ENCODE measurements at regions of chr6 and their contacts with region 1.

Region 1: DNA sequence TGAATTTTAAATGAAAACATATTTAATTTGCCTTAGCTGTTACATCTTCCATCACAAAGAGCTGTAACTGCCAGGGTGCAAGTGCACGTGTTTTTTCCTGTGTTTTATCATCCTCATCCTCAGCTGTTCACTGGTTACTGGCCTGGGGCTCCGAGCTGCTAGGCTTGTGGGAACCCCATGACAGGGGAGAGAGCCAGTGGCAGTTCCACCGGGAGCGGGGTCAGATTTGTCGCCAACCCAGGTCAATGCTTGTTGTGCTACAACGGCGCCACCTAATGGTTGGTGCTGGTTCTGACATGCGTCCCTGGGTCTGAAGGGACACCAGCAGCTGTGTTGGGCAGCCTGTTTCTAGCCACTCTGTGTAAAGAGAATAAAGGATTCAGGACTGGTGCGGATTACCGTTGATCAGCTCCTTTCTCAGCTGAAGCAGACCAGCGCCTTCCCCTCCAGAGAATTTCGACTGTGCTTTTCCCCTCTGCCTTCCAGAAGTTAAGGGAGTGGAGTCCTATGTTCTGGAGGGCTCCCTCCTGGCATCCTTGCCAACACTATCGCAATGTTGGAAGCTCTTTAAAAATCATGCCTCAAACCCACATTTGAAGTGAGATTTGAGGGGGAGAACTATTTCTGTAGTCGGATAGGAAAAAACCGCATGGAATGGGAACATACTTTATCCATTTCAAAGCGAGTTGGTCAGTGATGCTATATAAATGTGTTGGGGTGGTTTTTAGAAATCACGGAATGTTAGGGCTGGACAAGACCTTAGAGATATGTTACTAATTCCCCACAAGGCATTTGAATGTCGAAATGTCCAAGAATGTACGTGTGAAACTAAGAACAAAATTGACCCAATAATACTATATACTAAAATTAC is 32.1 kb downstream of the SUMO4 start:
- DNase-seq: peak; percentile 77
- ATAC-seq: peak; percentile 96
- H3K4me3 Mint-ChIP-seq: peak overlapping the region; percentile 44
- H3K27ac Mint-ChIP-seq: no peak overlapping the region
- H3K4me1 Mint-ChIP-seq: peaks cover 4% of the 10 kb centered on the region
- H3K27me3 Mint-ChIP-seq: no peaks in the 10 kb centered on the region
- CTCF ChIP-seq: no peak

Region 2: DNA sequence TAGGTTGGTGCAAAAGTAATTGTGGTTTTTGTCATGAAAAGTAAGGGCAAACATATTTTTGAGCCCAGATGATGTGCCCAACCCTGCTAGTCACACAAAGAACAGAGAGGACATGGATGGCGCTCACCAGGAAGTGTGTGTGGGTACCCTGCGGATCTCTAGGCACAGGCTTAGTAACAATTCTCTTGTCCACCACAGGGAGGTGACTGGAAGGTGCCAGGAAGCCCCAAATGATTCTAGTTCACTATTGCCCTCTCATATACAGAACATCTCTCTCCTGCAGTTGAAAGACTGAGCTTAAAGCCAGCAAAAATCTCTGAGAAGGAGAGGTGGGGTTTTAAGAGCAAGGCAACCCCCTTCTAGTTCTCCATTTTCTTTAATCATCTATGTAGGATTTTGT is 386.7 kb before region 1 on chr6:
- CTCF ChIA-PET with region 1: interaction called, 13 read pairs
- POLR2A ChIA-PET with region 1: no interaction called
- intact Hi-C with region 1: no loop called
- DNase-seq: no peak
- ATAC-seq: peak; percentile 60
- H3K4me3 Mint-ChIP-seq: no peak overlapping the region
- H3K27ac Mint-ChIP-seq: peak overlapping the region; percentile 68
- H3K4me1 Mint-ChIP-seq: peaks cover 45% of the 10 kb centered on the region
- H3K27me3 Mint-ChIP-seq: no peaks in the 10 kb centered on the region
- CTCF ChIP-seq: no peak

Region 3: GRCh38 chr6:149082286-149082707 is 349.8 kb before region 1 on chr6:
- CTCF ChIA-PET with region 1: interaction called, 52 read pairs
- POLR2A ChIA-PET with region 1: interaction called, 4 read pairs
- intact Hi-C with region 1: loop called (anchors 1 kb)
- DNase-seq: peak; percentile 43
- ATAC-seq: peak; percentile 75
- H3K4me3 Mint-ChIP-seq: no peak overlapping the region
- H3K27ac Mint-ChIP-seq: no peak overlapping the region
- H3K4me1 Mint-ChIP-seq: peaks cover 13% of the 10 kb centered on the region
- H3K27me3 Mint-ChIP-seq: no peaks in the 10 kb centered on the region
- CTCF ChIP-seq: peak; percentile 26

Region 4: GRCh38 chr6:149419696-149420404 is 12.3 kb before region 1 on chr6:
- CTCF ChIA-PET with region 1: interaction called, 10 read pairs
- POLR2A ChIA-PET with region 1: no interaction called
- intact Hi-C with region 1: no loop called
- DNase-seq: no peak
- ATAC-seq: no peak
- H3K4me3 Mint-ChIP-seq: no peak overlapping the region
- H3K27ac Mint-ChIP-seq: no peak overlapping the region
- H3K4me1 Mint-ChIP-seq: peaks cover 2% of the 10 kb centered on the region
- H3K27me3 Mint-ChIP-seq: no peaks in the 10 kb centered on the region
- CTCF ChIP-seq: no peak

Region 5: DNA sequence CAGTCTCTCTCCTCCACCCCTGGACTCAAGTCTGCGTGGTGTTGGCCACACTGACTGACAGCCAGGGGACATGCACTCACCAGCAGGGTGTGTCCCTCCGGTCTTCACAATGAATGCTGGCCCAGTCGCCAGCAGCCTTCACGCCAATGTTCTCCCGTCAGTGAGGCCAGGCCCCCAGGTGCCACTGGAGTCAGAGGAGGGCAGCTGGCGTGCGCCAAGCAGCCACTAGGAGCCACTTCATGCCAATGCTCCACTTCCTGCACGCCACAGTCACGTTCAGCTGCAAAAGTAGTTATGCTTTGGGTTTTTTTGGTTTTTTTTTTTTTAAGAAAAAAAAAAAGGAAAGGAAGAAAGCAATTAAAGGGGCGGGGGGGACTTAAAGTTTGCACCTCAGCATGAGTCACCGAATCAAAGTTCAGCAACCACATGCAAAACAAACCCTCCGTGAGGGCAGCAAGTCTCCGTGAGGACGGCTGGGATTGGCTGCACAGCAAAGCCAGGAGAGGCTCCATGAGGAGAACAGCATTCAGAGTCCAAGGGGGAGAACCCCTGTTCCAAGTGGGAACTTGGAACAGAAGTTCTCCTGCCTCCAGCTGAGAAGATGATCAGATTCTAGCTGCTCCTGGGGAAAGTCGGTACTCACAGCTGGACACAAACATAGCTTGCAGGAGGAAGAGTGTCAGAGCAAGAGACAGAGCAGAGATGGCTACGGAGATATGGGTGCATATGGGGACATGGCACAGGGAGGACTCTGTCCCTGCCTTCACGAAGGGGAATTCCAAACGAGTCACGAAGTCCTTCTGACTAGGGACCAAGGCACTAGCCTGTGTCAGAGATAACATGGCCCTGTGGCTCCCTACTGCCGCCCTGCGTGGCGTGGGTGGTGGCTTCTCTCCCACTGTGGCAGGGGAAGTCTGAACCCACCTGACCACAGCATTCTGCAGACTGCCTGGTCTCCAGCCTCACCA is 52.9 kb after region 1 on chr6 and contains the start of gene ZC3H12D:
- CTCF ChIA-PET with region 1: interaction called, 13 read pairs
- POLR2A ChIA-PET with region 1: interaction called, 5 read pairs
- intact Hi-C with region 1: no loop called
- DNase-seq: peak; percentile 75
- ATAC-seq: peak; percentile 47
- H3K4me3 Mint-ChIP-seq: peak within 1 kb of the TSS; percentile 97
- H3K27ac Mint-ChIP-seq: peak within 1 kb of the TSS; percentile 99
- H3K4me1 Mint-ChIP-seq: peaks cover 87% of the 10 kb centered on the region
- H3K27me3 Mint-ChIP-seq: no peaks in the 10 kb centered on the region
- CTCF ChIP-seq: no peak
- total RNA-seq, gene ZC3H12D: 184 and 225 TPM in 2 replicates

Region 6: GRCh38 chr6:149752600-149753373 is 320.6 kb after region 1 on chr6:
- CTCF ChIA-PET with region 1: no interaction called
- POLR2A ChIA-PET with region 1: interaction called, 12 read pairs
- intact Hi-C with region 1: no loop called
- DNase-seq: no peak
- ATAC-seq: no peak
- H3K4me3 Mint-ChIP-seq: no peak overlapping the region
- H3K27ac Mint-ChIP-seq: no peak overlapping the region
- H3K4me1 Mint-ChIP-seq: peaks cover 20% of the 10 kb centered on the region
- H3K27me3 Mint-ChIP-seq: no peaks in the 10 kb centered on the region
- CTCF ChIP-seq: no peak